Stomach (tissue), 19 donors: ENCODE measurements at regions of chr1 and their contacts with region 1.

Region 1: GRCh38 chr1:58652651-58653184 is 47.1 kb downstream of the MYSM1 start:
- DNase-seq: peak; percentile 64 to 95
- H3K4me3 ChIP-seq: no peak overlapping the region
- H3K27ac ChIP-seq: no peak overlapping the region
- H3K4me1 ChIP-seq: peaks cover 0 to 19% (median 5%) of the 10 kb centered on the region in 4 donors
- H3K27me3 ChIP-seq: no peaks in the 10 kb centered on the region
- CTCF ChIP-seq: peak in 5 of 7 experiments; percentile 44 to 85 (median 70)
- EP300 ChIP-seq: no peak
- POLR2A ChIP-seq: no peak

Region 2: DNA sequence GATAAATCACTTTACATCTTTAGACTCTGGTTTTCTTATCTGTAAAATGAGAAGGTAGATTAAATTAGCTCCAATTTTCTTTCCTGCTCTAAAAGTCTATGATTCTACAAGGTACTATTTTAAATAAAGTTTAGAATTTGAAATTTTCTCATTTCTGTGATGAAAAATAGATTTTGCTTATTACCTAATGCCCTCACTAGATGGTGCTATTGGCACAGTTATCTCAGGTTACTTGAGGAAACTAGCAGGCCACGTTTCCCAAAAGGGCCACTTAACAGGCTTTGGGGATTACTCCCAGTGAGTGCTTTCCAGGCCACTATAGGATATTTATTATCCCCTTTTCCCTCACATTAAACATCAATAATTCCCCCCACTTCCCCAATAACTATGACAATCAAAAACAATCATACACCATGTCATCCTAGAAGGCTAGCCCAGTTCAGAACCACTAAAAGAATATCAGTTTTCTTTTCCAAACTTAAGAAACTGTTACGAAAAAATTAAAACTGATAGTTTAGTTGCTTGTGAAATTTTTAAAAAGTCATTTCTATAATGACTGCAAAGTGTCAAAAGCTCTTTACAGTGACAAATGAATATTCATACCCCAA is 136.8 kb before region 1 on chr1:
- intact Hi-C with region 1: loop called (anchors 10 kb)
- DNase-seq: peak; percentile 38 to 88
- H3K4me3 ChIP-seq: no peak overlapping the region
- H3K27ac ChIP-seq: peak overlapping the region in 1 of 5 donors; percentile 31
- H3K4me1 ChIP-seq: peaks cover 0 to 6% (median 0%) of the 10 kb centered on the region in 4 donors
- H3K27me3 ChIP-seq: no peaks in the 10 kb centered on the region
- CTCF ChIP-seq: peak in 5 of 7 experiments; percentile 51 to 76 (median 64)
- EP300 ChIP-seq: no peak
- POLR2A ChIP-seq: no peak

Region 3: DNA sequence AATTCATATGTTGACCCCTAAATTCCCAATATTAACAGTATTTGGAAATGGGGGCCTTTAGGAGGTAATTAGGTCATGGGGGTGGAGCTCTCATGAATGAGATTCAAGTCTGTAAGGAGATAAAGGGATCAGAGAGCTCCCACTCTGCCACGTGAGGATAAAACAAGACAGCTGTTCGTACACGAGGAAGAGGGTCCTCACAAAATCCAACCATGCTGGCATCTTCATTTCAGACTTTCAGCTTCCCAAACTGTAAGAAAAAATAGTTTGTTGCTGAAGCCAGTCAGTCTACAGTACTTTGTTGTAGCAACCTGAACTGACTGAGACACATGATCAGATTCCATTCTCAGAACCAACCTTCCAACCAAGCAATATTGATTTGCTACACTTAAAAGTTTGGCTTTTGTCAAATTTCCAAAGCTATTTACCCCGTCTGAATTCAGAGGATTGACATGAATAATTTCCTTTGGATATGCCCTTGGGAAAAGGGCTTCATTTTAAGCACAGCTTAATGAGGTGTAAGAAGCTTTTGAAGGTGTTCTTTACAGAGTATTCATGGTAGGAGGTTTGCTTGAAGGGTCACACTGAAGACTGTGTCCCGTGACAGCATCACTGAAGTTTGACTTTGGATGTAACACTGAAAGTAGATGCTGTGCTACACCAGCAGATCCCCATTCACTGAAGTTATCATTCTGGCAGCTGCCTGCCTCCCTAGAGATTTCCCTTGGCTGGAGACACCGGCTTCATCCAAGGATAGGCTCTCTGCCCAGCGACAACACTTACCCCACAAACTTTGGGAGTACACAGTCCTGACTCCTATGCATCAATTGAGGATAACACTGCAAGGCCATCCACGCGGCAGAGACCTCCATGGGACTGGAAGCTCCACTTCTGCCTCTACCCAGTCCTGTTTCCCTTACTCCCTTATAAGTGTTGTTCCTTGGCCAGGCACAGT is 101.3 kb before region 1 on chr1:
- intact Hi-C with region 1: loop called (anchors 10 kb)
- DNase-seq: no peak
- H3K4me3 ChIP-seq: no peak overlapping the region
- H3K27ac ChIP-seq: no peak overlapping the region
- H3K4me1 ChIP-seq: peaks cover 0 to 7% (median 2%) of the 10 kb centered on the region in 4 donors
- H3K27me3 ChIP-seq: no peaks in the 10 kb centered on the region
- CTCF ChIP-seq: no peak
- EP300 ChIP-seq: no peak
- POLR2A ChIP-seq: no peak